ENCODE measurements at regions of chr4 and their contacts with region 1.

Region 1: DNA sequence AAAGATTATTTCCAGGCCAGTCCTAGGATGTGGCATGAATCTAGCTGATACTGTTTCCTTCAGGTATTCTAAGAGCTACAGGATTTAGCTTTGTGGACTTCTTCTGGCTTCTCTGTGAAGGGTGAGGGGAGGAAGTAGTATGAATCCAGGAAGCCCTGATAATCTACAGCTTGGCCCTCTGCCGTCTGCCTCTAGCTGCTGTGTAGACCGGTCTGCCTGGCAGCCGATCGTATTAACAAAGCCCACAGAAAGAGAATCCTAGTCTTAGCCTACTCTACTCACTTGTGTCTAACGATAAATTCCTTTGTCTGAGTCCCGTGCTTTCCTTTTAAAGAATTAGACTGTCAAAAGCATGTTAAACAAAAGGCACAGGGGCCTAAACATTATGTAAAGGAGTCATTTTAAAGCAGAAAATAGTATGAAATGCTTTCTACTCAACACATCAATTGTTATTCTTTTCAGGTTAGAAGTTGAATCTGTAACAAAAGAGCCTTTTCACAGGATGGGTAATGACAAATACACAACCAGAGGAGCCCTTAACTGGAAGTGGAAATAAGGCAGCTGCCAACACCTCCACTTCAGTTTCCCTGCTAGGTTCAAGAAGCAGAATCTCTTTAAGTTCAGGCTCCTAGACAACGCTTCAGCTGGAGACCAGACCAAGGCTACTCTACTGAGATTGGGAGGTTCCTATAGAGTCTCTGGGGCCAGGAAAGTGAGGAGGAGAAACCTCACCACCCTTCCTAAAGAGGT is 48.9 kb upstream of the UCP1 start:
- DNase-seq: no peak
- H3K4me3 ChIP-seq: no peak overlapping the region
- H3K27ac ChIP-seq: peak overlapping the region; percentile 22
- H3K4me1 ChIP-seq: peaks cover 79% of the 10 kb centered on the region
- CTCF ChIP-seq: no peak

Region 2: DNA sequence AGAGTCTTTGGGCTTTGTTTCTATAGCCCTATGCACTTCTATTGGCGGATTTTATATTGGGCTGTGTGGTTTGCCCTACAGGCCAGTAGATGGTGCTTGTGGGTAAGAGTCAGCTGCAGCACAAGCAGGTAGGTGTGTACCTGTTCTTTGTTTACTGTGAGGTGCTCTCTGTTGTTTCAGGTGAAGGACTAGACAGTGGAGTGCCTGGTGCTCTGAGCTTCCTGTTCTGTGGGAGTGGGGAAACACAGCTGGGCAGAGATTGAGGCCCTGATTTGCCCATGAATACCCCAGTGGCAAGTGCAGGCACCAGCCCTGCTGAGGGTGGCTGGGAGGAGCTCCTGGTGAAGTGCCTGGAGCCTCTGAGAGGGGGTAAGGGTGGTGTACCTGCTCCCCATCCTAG is 22.6 kb before region 1 on chr4:
- CTCF ChIA-PET with region 1: interaction called, 4 read pairs
- POLR2A ChIA-PET with region 1: interaction called, 11 read pairs
- intact Hi-C with region 1: no loop called
- DNase-seq: peak; percentile 73
- H3K4me3 ChIP-seq: no peak overlapping the region
- H3K27ac ChIP-seq: no peak overlapping the region
- H3K4me1 ChIP-seq: peaks cover 2% of the 10 kb centered on the region
- CTCF ChIP-seq: peak; percentile 87

Region 3: GRCh38 chr4:140637836-140638235 is 20.2 kb after region 1 on chr4:
- CTCF ChIA-PET with region 1: interaction called, 3 read pairs
- POLR2A ChIA-PET with region 1: interaction called, 16 read pairs
- intact Hi-C with region 1: no loop called
- DNase-seq: peak; percentile 85
- H3K4me3 ChIP-seq: no peak overlapping the region
- H3K27ac ChIP-seq: no peak overlapping the region
- H3K4me1 ChIP-seq: peaks cover 20% of the 10 kb centered on the region
- CTCF ChIP-seq: peak; percentile 99

Region 4: GRCh38 chr4:140662055-140662454 is 44.4 kb after region 1 on chr4:
- CTCF ChIA-PET with region 1: no interaction called
- POLR2A ChIA-PET with region 1: no interaction called
- intact Hi-C with region 1: no loop called
- DNase-seq: no peak
- H3K4me3 ChIP-seq: no peak overlapping the region
- H3K27ac ChIP-seq: no peak overlapping the region
- H3K4me1 ChIP-seq: peaks cover 2% of the 10 kb centered on the region
- CTCF ChIP-seq: no peak

Region 5: DNA sequence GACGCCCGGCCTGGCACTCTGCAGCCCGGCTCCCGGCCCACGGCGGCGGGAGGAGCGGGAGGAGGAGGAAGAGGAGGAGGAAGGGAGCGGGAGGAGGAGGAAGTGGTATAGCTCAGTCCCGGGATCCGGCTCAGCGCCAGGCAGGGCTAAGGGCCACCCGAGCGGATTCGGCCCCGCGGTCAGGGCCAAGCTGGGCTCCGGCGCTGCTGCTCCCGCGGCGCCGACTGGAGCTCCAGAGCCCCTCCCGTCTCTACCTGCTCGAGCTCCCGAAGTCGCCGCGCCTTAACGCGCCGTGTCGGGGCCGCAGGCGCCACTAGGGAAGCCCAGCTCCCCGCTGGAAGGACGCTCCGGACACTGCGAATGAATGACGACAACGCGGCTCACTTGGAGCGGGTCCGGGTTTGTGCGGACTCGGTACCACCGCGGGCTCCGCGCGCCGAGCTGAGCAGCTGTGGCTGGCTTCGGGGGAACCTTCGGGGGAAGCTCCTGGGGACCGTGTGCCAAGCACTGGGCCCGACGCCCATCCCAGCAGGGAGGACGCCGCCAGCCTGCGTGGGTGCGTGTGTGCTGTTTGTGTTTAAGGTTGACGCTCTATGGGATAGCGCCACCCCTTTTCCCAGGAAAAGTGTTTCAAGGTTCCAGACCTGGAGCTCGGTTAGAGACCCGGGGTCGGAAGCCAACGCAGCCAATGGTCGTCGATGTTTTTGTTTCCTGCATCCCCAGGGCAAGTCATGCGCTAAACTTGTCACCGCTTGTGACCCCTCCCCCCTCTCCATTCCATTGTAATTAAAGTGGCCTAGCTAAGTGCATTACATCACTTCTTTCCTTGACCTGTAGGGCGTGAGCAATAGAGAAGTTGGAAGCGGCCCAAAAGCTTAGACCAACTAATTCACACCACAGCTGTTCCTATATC is 138.9 kb after region 1 on chr4 and contains the start of gene TBC1D9:
- CTCF ChIA-PET with region 1: no interaction called
- POLR2A ChIA-PET with region 1: interaction called, 3 read pairs
- intact Hi-C with region 1: loop called (anchors 2 kb)
- DNase-seq: peak; percentile 75
- H3K4me3 ChIP-seq: peak within 1 kb of the TSS; percentile 73
- H3K27ac ChIP-seq: no peak within 1 kb of the TSS
- H3K4me1 ChIP-seq: peaks cover 30% of the 10 kb centered on the region
- CTCF ChIP-seq: peak; percentile 33
- total RNA-seq, gene TBC1D9: 1.0 and 1.6 TPM in 2 replicates

Measured in OCI-LY7 (cell line).